PC-3 (cell line): ENCODE measurements at regions of chr10 and their contacts with region 1.

Region 1: GRCh38 chr10:25226775-25227682 is 52.2 kb downstream of the GPR158 start:
- DNase-seq: peak; percentile 59
- ATAC-seq: peak; percentile 45
- H3K4me3 ChIP-seq: no peak overlapping the region
- H3K27ac ChIP-seq: no peak overlapping the region
- H3K4me1 ChIP-seq: no peaks in the 10 kb centered on the region
- H3K27me3 ChIP-seq: peaks cover 5% of the 10 kb centered on the region; the same call in 1 of the 2 replicates
- CTCF ChIP-seq: peak; percentile 75

Region 2: GRCh38 chr10:24556750-24557742 is 670.0 kb before region 1 on chr10:
- CTCF ChIA-PET with region 1: no interaction called
- POLR2A ChIA-PET with region 1: no interaction called
- intact Hi-C with region 1: loop called (anchors 10 kb)
- DNase-seq: peak; percentile 74
- ATAC-seq: peak; percentile 48
- H3K4me3 ChIP-seq: no peak overlapping the region
- H3K27ac ChIP-seq: no peak overlapping the region
- H3K4me1 ChIP-seq: peaks cover 10% of the 10 kb centered on the region; the same call in 1 of the 2 replicates
- H3K27me3 ChIP-seq: no peaks in the 10 kb centered on the region
- CTCF ChIP-seq: peak; percentile 63

Region 3: GRCh38 chr10:25026463-25026862 is 200.6 kb before region 1 on chr10:
- CTCF ChIA-PET with region 1: no interaction called
- POLR2A ChIA-PET with region 1: no interaction called
- intact Hi-C with region 1: loop called (anchors 10 kb)
- DNase-seq: peak; percentile 18
- ATAC-seq: no peak
- H3K4me3 ChIP-seq: no peak overlapping the region
- H3K27ac ChIP-seq: no peak overlapping the region
- H3K4me1 ChIP-seq: no peaks in the 10 kb centered on the region
- H3K27me3 ChIP-seq: no peaks in the 10 kb centered on the region
- CTCF ChIP-seq: peak; percentile 44; the same call in 1 of the 2 replicates

Region 4: GRCh38 chr10:25113191-25114035 is 113.6 kb before region 1 on chr10:
- CTCF ChIA-PET with region 1: interaction called, 26 read pairs
- POLR2A ChIA-PET with region 1: no interaction called
- intact Hi-C with region 1: loop called (anchors 1 kb)
- DNase-seq: peak; percentile 87
- ATAC-seq: peak; percentile 89
- H3K4me3 ChIP-seq: peak overlapping the region; percentile 42
- H3K27ac ChIP-seq: peak overlapping the region; percentile 94
- H3K4me1 ChIP-seq: peaks cover 17% of the 10 kb centered on the region
- H3K27me3 ChIP-seq: no peaks in the 10 kb centered on the region
- CTCF ChIP-seq: peak; percentile 87

Region 5: GRCh38 chr10:25758041-25758457 is 531.0 kb after region 1 on chr10:
- CTCF ChIA-PET with region 1: no interaction called
- POLR2A ChIA-PET with region 1: no interaction called
- intact Hi-C with region 1: no loop called
- DNase-seq: peak; percentile 16
- ATAC-seq: no peak
- H3K4me3 ChIP-seq: no peak overlapping the region
- H3K27ac ChIP-seq: no peak overlapping the region
- H3K4me1 ChIP-seq: no peaks in the 10 kb centered on the region
- H3K27me3 ChIP-seq: no peaks in the 10 kb centered on the region
- CTCF ChIP-seq: peak; percentile 51